Right cardiac atrium (tissue), 5 donors: ENCODE measurements at regions of chr13 and their contacts with region 1.

Region 1: GRCh38 chr13:30408319-30409101 is 13.8 kb upstream of the UBE2L5 start:
- DNase-seq: peak; percentile 96 to 98 (median 98)
- ATAC-seq: peak; percentile 95 to 96
- H3K4me3 ChIP-seq: peak overlapping the region; percentile 31
- H3K27ac ChIP-seq: peak overlapping the region; percentile 81
- H3K4me1 ChIP-seq: no peaks in the 10 kb centered on the region
- H3K27me3 ChIP-seq: no peaks in the 10 kb centered on the region

Region 2: GRCh38 chr13:30319655-30320054 is 88.9 kb before region 1 on chr13:
- intact Hi-C with region 1: loop called in 1 of 4 experiments (anchors 10 kb)
- DNase-seq: peak in 2 of 3 donors; percentile 44 to 65
- ATAC-seq: peak; percentile 44 to 58
- H3K4me3 ChIP-seq: no peak overlapping the region
- H3K27ac ChIP-seq: no peak overlapping the region
- H3K4me1 ChIP-seq: peaks cover 2% of the 10 kb centered on the region
- H3K27me3 ChIP-seq: no peaks in the 10 kb centered on the region

Region 3: GRCh38 chr13:30465585-30466357 is 57.3 kb after region 1 on chr13 and contains the start of gene HMGB1:
- intact Hi-C with region 1: loop called in 2 of 4 experiments (anchors 10 kb)
- DNase-seq: peak; percentile 98 to 99 (median 98)
- ATAC-seq: peak; percentile 98 to 99
- H3K4me3 ChIP-seq: peak within 1 kb of the TSS; percentile 99
- H3K27ac ChIP-seq: peak within 1 kb of the TSS; percentile 99
- H3K4me1 ChIP-seq: no peaks in the 10 kb centered on the region
- H3K27me3 ChIP-seq: no peaks in the 10 kb centered on the region
- total RNA-seq, gene HMGB1: 185 to 198 (median 192) TPM